IMR-90 (cell line): ENCODE measurements at regions of chr15 and their contacts with region 1.

Region 1: GRCh38 chr15:36109943-36110658 is 469.3 kb upstream of the CDIN1 start:
- DNase-seq: peak; percentile 81
- ATAC-seq: peak; percentile 58
- H3K4me3 ChIP-seq: no peak overlapping the region
- H3K27ac ChIP-seq: no peak overlapping the region
- H3K4me1 ChIP-seq: peaks cover 2% of the 10 kb centered on the region; the same call in 1 of the 2 replicates
- H3K27me3 ChIP-seq: no peaks in the 10 kb centered on the region; the same call in 1 of the 2 replicates
- CTCF ChIP-seq: no peak
- POLR2A ChIP-seq: no peak
- RAD21 ChIP-seq: no peak

Region 2: DNA sequence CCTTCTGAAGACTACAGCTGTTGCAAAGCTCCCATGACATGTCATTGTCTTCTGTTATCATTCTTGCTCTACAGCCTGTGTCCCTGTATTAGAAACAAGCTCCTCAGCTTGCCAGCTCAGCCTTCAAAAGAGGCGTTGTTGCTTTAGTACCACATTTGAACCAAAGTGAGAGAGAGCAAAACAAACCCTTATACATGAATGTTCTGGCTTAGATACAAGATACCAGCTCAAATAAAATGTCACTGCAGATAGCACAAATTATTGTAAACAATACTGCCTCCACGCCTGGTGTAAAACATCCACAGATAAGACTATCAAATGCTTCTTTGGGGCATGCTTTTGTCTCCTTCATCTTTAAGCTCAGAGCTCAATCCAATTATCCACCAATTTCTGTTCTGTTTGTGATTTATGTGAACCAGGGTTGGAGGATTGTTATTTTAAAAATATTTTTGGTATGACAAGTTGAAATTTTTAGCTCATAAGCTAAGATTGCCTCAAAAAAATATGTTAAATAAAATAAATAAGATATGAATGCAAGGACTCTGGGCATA is 65.7 kb after region 1 on chr15:
- CTCF ChIA-PET with region 1: no interaction called
- POLR2A ChIA-PET with region 1: no interaction called
- dilution Hi-C with region 1: no loop called
- in situ Hi-C with region 1: no loop called
- intact Hi-C with region 1: loop called (anchors 2 kb)
- DNase-seq: no peak
- ATAC-seq: peak; percentile 29; the same call in 1 of the 2 replicates
- H3K4me3 ChIP-seq: no peak overlapping the region
- H3K27ac ChIP-seq: no peak overlapping the region
- H3K4me1 ChIP-seq: peaks cover 9% of the 10 kb centered on the region
- H3K27me3 ChIP-seq: no peaks in the 10 kb centered on the region
- CTCF ChIP-seq: no peak
- POLR2A ChIP-seq: no peak
- RAD21 ChIP-seq: no peak

Region 3: GRCh38 chr15:36407647-36408046 is 297.5 kb after region 1 on chr15:
- CTCF ChIA-PET with region 1: no interaction called
- POLR2A ChIA-PET with region 1: no interaction called
- dilution Hi-C with region 1: no loop called
- in situ Hi-C with region 1: no loop called
- intact Hi-C with region 1: no loop called
- DNase-seq: peak; percentile 63
- ATAC-seq: peak; percentile 76
- H3K4me3 ChIP-seq: no peak overlapping the region
- H3K27ac ChIP-seq: no peak overlapping the region
- H3K4me1 ChIP-seq: peaks cover 7% of the 10 kb centered on the region; the same call in 1 of the 2 replicates
- H3K27me3 ChIP-seq: no peaks in the 10 kb centered on the region
- CTCF ChIP-seq: no peak
- POLR2A ChIP-seq: no peak
- RAD21 ChIP-seq: no peak

Region 4: GRCh38 chr15:36517758-36518157 is 407.7 kb after region 1 on chr15:
- CTCF ChIA-PET with region 1: no interaction called
- POLR2A ChIA-PET with region 1: no interaction called
- dilution Hi-C with region 1: no loop called
- in situ Hi-C with region 1: no loop called
- intact Hi-C with region 1: no loop called
- DNase-seq: no peak
- ATAC-seq: no peak
- H3K4me3 ChIP-seq: no peak overlapping the region
- H3K27ac ChIP-seq: no peak overlapping the region
- H3K4me1 ChIP-seq: no peaks in the 10 kb centered on the region
- H3K27me3 ChIP-seq: no peaks in the 10 kb centered on the region
- CTCF ChIP-seq: no peak
- POLR2A ChIP-seq: no peak
- RAD21 ChIP-seq: no peak